ENCODE measurements at regions of chr1 and their contacts with region 1.

Region 1: DNA sequence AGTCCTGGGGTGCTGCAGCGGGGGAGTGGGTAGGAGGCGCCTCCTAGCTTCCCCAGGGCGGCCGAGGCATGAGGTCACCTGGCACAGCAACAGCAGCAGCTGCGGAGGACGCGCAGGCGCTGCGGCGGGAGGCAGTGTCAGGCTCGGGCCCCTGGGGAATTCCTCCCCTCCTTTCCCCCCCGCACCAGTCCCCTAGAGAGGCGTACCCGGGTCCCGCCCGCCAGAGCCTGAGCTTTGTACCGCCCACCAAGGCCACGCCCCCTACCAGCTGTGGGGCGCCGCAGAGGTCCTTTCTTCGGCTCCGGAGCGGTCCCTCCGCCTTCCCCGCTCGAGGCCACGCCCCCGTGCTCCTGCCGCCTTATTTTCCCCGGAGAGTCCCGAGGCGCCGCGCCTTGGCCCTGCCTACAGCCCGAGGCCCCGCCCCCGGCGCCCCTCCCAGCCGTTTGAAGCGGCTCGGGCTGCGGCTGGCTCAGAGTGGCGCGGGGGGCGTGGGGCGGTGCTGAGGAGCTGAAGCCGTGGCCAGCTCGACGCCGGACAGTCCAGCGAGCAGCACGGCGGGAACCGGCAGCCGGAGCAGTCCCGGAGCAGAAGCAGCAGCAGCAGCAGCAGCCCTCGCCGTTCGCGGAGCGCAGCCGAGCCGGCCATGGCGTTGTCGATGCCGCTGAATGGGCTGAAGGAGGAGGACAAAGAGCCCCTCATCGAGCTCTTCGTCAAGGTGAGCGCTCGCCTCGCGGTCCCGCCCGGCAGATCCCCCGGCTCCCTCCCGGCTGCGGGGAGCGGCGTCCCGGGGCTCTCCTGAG is at the start of gene CLIC4:
- DNase-seq: peak; percentile 98
- H3K4me3 Mint-ChIP-seq: peak within 1 kb of the TSS; percentile 89
- H3K27ac Mint-ChIP-seq: peak within 1 kb of the TSS; percentile 94
- H3K4me1 Mint-ChIP-seq: peaks cover 16% of the 10 kb centered on the region
- H3K27me3 Mint-ChIP-seq: no peaks in the 10 kb centered on the region
- CTCF ChIP-seq: no peak
- total RNA-seq, gene CLIC4: 242 and 281 TPM in 2 replicates

Region 2: DNA sequence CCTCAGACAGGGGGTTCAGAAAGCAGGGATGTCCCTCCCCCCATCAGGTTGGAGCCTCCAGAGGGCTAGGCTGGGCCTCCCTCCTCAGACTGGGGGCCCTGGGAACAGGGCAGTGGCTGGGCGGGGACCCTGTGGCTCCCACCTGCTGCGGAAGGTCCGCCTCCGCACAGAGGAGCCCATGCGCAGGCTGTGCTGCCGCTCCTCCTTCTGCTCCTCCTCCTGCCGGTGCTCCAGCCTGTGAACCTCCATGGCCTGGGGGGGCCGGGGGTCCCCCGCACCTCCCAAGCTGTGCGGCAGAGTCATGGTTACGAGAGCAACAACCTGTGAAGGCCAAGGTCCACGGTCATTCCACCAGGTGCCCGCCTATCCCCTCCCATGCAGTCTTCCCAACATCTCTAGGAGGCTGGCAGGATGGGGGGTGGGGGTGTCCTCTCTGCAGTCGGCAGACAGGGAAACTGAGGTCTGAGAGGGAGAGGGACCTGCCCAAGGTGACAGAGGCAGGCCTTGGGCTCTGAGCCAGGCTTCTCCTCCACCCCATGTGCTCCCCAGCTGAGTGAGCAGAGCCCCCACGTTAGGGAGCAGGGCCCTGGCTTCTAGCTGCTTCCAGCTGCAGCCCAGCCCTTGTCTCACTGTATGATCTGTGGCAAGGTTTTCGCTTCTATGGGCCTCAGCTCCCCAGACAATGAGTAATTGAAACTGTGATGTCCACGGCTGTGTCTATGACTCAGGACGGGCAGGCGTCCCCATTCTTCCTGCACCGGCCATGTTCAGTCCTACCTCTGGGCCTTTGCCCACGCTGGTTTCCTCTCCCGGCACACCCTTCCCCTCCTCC is 636.6 kb before region 1 on chr1:
- CTCF ChIA-PET with region 1: no interaction called
- POLR2A ChIA-PET with region 1: no interaction called
- intact Hi-C with region 1: no loop called
- DNase-seq: peak; percentile 86
- H3K4me3 Mint-ChIP-seq: no peak overlapping the region
- H3K27ac Mint-ChIP-seq: peak overlapping the region; percentile 84
- H3K4me1 Mint-ChIP-seq: peaks cover 21% of the 10 kb centered on the region
- H3K27me3 Mint-ChIP-seq: no peaks in the 10 kb centered on the region
- CTCF ChIP-seq: no peak

Region 3: GRCh38 chr1:24688621-24689195 is 56.4 kb before region 1 on chr1:
- CTCF ChIA-PET with region 1: interaction called, 30 read pairs
- POLR2A ChIA-PET with region 1: interaction called, 29 read pairs
- intact Hi-C with region 1: loop called (anchors 1 kb)
- DNase-seq: peak; percentile 80
- H3K4me3 Mint-ChIP-seq: no peak overlapping the region
- H3K27ac Mint-ChIP-seq: peak overlapping the region; percentile 13
- H3K4me1 Mint-ChIP-seq: peaks cover 9% of the 10 kb centered on the region
- H3K27me3 Mint-ChIP-seq: no peaks in the 10 kb centered on the region
- CTCF ChIP-seq: peak; percentile 87

Region 4: DNA sequence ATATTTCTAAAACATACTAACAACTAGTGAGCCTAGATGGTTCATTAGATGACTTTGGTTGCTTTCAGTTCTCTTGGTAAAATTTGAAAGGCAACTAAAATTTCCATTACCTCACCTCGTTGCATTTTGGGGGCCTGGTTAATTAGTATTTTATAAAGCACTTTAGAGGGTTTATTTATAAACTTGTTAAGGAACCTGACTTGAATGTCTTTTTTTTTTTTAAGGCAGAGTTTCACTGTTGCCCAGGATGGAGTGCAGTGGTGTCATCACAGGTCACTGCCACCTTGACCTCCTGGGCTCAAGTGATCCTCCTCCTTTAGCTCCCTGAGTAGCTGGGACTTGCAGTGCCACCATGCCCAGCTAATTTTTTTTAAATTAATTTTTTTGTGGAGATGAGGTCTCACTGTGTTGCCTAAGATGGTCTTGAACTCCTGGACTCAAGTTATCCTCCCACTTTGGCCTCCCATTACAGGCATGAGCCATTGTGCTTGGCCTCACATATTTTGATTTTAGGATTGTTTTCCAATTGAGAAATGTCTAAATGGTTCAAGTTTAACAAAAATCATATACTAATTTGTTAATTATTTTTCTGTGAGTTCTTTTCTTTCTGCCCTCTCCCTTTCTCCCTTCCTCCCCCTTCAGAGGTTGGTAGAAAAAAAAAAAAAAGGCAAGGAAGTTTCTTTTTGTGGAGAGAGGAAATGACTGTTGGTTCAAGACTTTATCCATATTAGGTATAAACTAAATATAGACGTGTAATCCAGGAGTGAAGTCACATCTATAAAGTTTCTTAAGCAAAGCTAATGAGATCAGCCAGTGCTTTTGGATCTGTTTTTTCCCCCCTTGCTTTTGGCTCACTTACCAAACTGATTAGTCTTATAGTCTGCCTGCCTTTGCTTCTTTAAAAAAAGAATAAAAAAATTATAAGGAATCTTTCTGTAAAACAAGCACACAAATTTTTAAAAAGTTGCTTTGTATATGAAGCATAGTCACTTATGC is 24.8 kb after region 1 on chr1:
- CTCF ChIA-PET with region 1: interaction called, 3 read pairs
- POLR2A ChIA-PET with region 1: interaction called, 50 read pairs
- intact Hi-C with region 1: no loop called
- DNase-seq: peak; percentile 73
- H3K4me3 Mint-ChIP-seq: no peak overlapping the region
- H3K27ac Mint-ChIP-seq: peak overlapping the region; percentile 88
- H3K4me1 Mint-ChIP-seq: peaks cover 17% of the 10 kb centered on the region
- H3K27me3 Mint-ChIP-seq: no peaks in the 10 kb centered on the region
- CTCF ChIP-seq: no peak

Region 5: GRCh38 chr1:24786191-24786590 is 41.1 kb after region 1 on chr1:
- CTCF ChIA-PET with region 1: no interaction called
- POLR2A ChIA-PET with region 1: interaction called, 12 read pairs
- intact Hi-C with region 1: no loop called
- DNase-seq: peak; percentile 74
- H3K4me3 Mint-ChIP-seq: peak overlapping the region; percentile 38
- H3K27ac Mint-ChIP-seq: peak overlapping the region; percentile 39
- H3K4me1 Mint-ChIP-seq: peaks cover 11% of the 10 kb centered on the region
- H3K27me3 Mint-ChIP-seq: no peaks in the 10 kb centered on the region
- CTCF ChIP-seq: no peak

Region 6: GRCh38 chr1:24830680-24831272 is 85.7 kb after region 1 on chr1:
- CTCF ChIA-PET with region 1: interaction called, 13 read pairs
- POLR2A ChIA-PET with region 1: interaction called, 57 read pairs
- intact Hi-C with region 1: loop called (anchors 2 kb)
- DNase-seq: peak; percentile 64
- H3K4me3 Mint-ChIP-seq: no peak overlapping the region
- H3K27ac Mint-ChIP-seq: no peak overlapping the region
- H3K4me1 Mint-ChIP-seq: peaks cover 19% of the 10 kb centered on the region
- H3K27me3 Mint-ChIP-seq: no peaks in the 10 kb centered on the region
- CTCF ChIP-seq: peak; percentile 78

Region 7: DNA sequence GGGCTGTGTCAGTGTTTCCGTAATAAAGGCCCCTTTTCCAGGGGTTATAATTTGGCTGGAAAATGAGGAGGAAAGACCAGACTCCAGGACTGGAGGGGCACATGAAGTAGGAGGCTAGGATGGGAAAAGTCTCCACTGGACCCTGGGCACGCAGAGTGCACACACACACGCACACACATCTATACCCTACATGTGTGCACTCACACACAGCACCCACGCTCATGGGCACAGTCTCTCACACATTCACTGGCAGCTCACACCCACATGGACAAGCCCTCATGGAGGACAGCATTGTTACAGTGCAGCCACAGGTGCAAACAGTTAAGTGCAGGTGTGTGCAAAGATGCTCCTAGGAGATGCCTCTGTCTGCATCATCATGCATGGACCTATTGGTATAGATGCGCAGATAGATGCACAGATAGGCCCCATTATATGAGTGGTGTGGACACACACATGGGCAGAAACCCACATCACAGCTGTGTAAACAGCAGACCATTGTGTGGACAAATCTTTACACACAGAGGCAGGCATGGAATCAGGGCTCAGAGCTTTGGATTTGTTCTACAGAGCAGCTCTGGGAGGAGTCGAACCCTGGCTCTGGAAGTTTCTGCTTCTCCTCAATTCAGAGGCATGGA is 194.0 kb after region 1 on chr1:
- CTCF ChIA-PET with region 1: no interaction called
- POLR2A ChIA-PET with region 1: no interaction called
- intact Hi-C with region 1: no loop called
- DNase-seq: no peak
- H3K4me3 Mint-ChIP-seq: no peak overlapping the region
- H3K27ac Mint-ChIP-seq: no peak overlapping the region
- H3K4me1 Mint-ChIP-seq: no peaks in the 10 kb centered on the region
- H3K27me3 Mint-ChIP-seq: no peaks in the 10 kb centered on the region
- CTCF ChIP-seq: no peak

Region 8: GRCh38 chr1:25198663-25199252 is 453.6 kb after region 1 on chr1:
- CTCF ChIA-PET with region 1: no interaction called
- POLR2A ChIA-PET with region 1: no interaction called
- intact Hi-C with region 1: no loop called
- DNase-seq: no peak
- H3K4me3 Mint-ChIP-seq: no peak overlapping the region
- H3K27ac Mint-ChIP-seq: no peak overlapping the region
- H3K4me1 Mint-ChIP-seq: peaks cover 7% of the 10 kb centered on the region
- H3K27me3 Mint-ChIP-seq: peaks cover 21% of the 10 kb centered on the region
- CTCF ChIP-seq: no peak

Measured in MCF 10A (cell line).